ENCODE measurements at regions of chrX and their contacts with region 1.

Region 1: DNA sequence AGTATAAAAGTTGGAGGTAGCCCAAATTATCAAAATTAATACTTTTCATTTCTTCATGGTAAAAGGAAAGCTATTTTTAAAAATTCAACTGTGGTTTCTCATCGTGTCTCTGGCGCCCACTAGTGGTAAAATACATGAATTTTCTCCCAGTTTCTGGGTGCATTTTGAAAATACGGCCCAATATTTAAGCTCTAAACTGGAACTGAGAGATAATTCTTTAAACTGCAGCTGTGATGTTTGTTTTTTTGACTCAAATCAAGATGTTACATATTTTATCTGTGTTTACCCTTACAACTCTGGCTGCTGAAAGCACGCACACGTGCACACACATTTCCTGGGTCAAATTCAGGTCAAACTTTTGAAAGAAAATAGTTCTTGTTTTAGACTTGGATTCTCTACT is 123.9 kb upstream of the ACSL4 start:
- DNase-seq: no peak
- CTCF ChIP-seq: peak; percentile 66

Region 2: DNA sequence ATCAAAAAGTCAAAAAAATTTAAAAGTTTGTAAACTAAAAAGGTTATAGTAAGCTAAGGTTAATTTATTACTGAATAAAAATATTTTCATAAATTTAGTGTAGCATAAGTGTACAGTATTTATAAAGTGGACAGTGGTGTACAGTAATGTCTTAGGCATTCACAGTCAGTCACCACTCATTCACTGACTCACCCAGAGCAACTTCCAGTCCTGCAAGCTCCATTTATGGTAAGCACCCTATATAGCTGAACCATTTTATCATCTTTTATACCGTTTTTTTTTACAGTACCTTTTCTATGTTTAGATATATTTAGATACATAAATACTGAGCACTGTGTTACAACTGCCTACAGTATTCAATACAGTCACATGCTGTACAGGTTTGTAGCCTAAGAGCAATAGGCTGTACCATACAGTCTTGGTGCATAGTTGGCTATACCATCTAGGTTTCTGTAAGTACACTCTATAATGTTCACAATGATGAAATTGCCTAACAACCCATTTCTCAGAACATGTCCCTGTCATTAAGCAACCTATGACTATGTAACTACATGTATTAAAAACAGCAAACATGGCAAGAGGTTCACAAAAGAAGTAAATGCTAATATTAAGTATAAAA is 142.5 kb before region 1 on chrX:
- in situ Hi-C with region 1: loop called (anchors 10 kb)
- DNase-seq: no peak
- CTCF ChIP-seq: no peak

Region 3: DNA sequence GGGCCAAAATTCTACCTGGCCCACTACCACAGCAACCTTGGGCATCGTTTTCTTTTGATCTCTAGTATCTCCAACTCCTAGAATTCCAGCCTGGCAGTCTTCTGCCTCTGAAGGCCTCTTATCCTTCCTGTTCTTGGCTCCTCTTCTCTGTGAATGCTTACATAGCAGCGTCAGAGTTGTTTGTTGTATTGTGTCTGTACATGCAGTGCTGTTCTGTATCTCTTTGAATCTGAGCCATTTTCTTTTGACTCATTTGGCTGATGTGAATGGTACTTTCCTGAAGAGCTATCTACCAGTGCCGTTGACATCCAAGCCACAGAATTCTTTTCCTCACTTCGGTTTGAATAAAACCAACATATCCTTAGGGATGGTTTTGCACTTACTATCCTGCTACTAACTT is 225.2 kb after region 1 on chrX:
- in situ Hi-C with region 1: no loop called
- DNase-seq: no peak
- CTCF ChIP-seq: no peak

Region 4: GRCh38 chrX:110346681-110347080 is 489.7 kb after region 1 on chrX:
- in situ Hi-C with region 1: no loop called
- DNase-seq: no peak
- CTCF ChIP-seq: no peak